Heart left ventricle (tissue), 16 donors: ENCODE measurements at regions of chr15 and their contacts with region 1.

Region 1: GRCh38 chr15:99282121-99282520 is 30.8 kb downstream of the LRRC28 start:
- DNase-seq: no peak
- ATAC-seq: peak in 1 of 4 donors; percentile 41
- H3K4me3 ChIP-seq: no peak overlapping the region
- H3K27ac ChIP-seq: peak overlapping the region in 4 of 12 donors; percentile 5 to 30 (median 19)
- H3K4me1 ChIP-seq: peaks cover 0 to 25% (median 6%) of the 10 kb centered on the region in 12 donors
- H3K27me3 ChIP-seq: no peaks in the 10 kb centered on the region
- CTCF ChIP-seq: no peak
- POLR2A ChIP-seq: no peak

Region 2: DNA sequence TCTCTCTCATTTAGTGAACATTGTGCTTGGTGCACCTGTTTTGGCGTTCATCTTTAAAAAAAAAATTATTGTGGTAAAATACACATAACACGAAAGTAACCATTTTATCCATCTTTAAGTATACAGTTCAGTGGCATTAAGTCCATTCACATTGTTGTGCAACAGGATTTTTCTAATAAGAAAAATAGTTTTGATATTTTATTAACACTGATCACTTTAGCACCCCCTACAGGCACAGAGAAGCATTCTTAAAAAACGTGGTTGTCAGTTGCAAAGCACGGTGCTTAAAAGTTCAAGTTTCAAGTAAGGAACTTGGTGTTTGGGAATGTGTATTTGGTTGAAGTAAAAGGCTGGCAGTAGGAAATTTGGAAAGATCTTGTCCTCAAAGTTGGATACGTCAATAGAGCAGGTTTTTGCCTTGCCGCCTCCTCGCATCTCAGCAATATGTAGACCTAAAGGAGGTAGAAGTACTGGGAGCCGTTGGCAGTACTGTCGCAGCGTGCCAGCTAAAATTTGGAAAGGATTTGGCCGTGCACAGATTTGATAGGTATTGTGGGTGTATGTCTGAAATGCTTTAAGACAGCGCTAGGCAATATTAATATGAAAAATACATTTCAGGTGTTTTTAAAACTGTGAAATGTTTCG is 79.5 kb after region 1 on chr15:
- intact Hi-C with region 1: loop called in 1 of 10 experiments (anchors 10 kb)
- DNase-seq: no peak
- ATAC-seq: no peak
- H3K4me3 ChIP-seq: no peak overlapping the region
- H3K27ac ChIP-seq: no peak overlapping the region
- H3K4me1 ChIP-seq: no peaks in the 10 kb centered on the region
- H3K27me3 ChIP-seq: no peaks in the 10 kb centered on the region
- CTCF ChIP-seq: peak; percentile 27 to 60 (median 42)
- POLR2A ChIP-seq: no peak

Region 3: GRCh38 chr15:99486371-99487336 is 204.5 kb after region 1 on chr15:
- intact Hi-C with region 1: loop called in 1 of 10 experiments (anchors 10 kb)
- DNase-seq: peak; percentile 84 to 94 (median 93)
- ATAC-seq: peak; percentile 84 to 94 (median 93)
- H3K4me3 ChIP-seq: peak overlapping the region in 10 of 12 donors; percentile 13 to 56 (median 46)
- H3K27ac ChIP-seq: peak overlapping the region; percentile 20 to 91 (median 82)
- H3K4me1 ChIP-seq: peaks cover 0 to 35% (median 27%) of the 10 kb centered on the region in 12 donors
- H3K27me3 ChIP-seq: no peaks in the 10 kb centered on the region
- CTCF ChIP-seq: no peak
- POLR2A ChIP-seq: peak in 1 of 2 donors; percentile 34

Region 4: DNA sequence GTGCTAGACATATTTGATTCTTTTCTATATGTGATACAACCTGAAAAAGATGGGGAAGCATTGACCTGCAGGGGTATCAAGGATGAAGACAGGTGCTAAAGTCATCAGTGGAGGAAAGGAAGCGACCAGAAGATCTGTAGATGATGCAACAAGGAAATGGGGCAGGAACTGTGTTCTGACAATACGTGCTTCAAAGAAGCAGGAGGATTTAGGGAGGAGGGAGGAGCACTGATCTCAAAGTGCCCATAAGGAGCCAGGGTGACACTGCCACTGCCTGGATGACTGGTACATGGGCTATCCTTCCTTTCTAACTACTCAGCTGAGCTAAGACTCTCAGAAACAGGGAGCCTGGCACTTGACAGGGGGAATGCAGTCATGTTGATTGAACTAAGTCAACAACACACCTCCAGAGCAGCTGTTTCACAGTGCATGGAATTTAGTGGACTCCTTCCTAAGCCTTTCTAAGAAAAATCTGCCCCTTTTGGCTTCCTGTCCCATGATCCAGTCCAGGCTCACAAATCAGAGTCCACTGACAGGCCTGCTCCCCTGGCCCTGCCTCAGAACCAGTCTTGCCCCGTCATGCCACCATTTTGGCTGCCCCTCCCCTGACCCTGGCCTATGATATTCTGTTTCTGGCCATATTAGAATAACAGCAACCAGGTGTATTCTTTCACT is 439.1 kb after region 1 on chr15:
- intact Hi-C with region 1: loop called in 3 of 10 experiments (anchors 5 to 10 kb)
- DNase-seq: no peak
- ATAC-seq: no peak
- H3K4me3 ChIP-seq: no peak overlapping the region
- H3K27ac ChIP-seq: no peak overlapping the region
- H3K4me1 ChIP-seq: peaks cover 8 to 50% (median 30%) of the 10 kb centered on the region in 12 donors
- H3K27me3 ChIP-seq: no peaks in the 10 kb centered on the region
- CTCF ChIP-seq: no peak
- POLR2A ChIP-seq: no peak

Region 5: GRCh38 chr15:99755692-99756409 is 473.7 kb after region 1 on chr15:
- intact Hi-C with region 1: loop called in 4 of 10 experiments (anchors 2 to 5 kb)
- DNase-seq: peak; percentile 45 to 60 (median 55)
- ATAC-seq: peak; percentile 73 to 91 (median 88)
- H3K4me3 ChIP-seq: no peak overlapping the region
- H3K27ac ChIP-seq: no peak overlapping the region
- H3K4me1 ChIP-seq: peaks cover 0 to 4% (median 0%) of the 10 kb centered on the region in 12 donors
- H3K27me3 ChIP-seq: no peaks in the 10 kb centered on the region
- CTCF ChIP-seq: peak; percentile 78 to 92 (median 88)
- POLR2A ChIP-seq: no peak